ENCODE measurements at regions of chr11 and their contacts with region 1.

Region 1: GRCh38 chr11:46616998-46617675 is at the starts of genes ATG13 and HARBI1:
- DNase-seq: peak; percentile 89 to 95 (median 94)
- ATAC-seq: peak; percentile 96
- H3K4me3 ChIP-seq: peak within 1 kb of the TSS; percentile 99
- H3K4me3 Mint-ChIP-seq: peak within 1 kb of the TSS; percentile 93 to 99 (median 96)
- H3K27ac ChIP-seq: peak within 1 kb of the TSS; percentile 100
- H3K27ac Mint-ChIP-seq: peak within 1 kb of the TSS; percentile 95 to 100 (median 99)
- H3K4me1 ChIP-seq: peaks cover 17 to 27% of the 10 kb centered on the region in 2 donors
- H3K4me1 Mint-ChIP-seq: peaks cover 26 to 53% (median 42%) of the 10 kb centered on the region in 7 donors
- H3K27me3 ChIP-seq: no peaks in the 10 kb centered on the region
- H3K27me3 Mint-ChIP-seq: no peaks in the 10 kb centered on the region
- total RNA-seq, gene ATG13: 70.0 to 114 (median 96.8) TPM
- total RNA-seq, gene HARBI1: 5.8 to 18.1 (median 8.0) TPM

Region 2: GRCh38 chr11:46121724-46122477 is 495.2 kb before region 1 on chr11:
- CTCF ChIA-PET with region 1: no interaction called
- POLR2A ChIA-PET with region 1: interaction called, 3 read pairs
- intact Hi-C with region 1: loop called in 1 of 2 experiments (anchors 2 kb)
- DNase-seq: peak in 7 of 9 donors; percentile 20 to 85 (median 80)
- ATAC-seq: peak; percentile 69
- H3K4me3 ChIP-seq: peak overlapping the region; percentile 53
- H3K4me3 Mint-ChIP-seq: peak overlapping the region; percentile 83 to 95 (median 93)
- H3K27ac ChIP-seq: peak overlapping the region; percentile 80
- H3K27ac Mint-ChIP-seq: peak overlapping the region; percentile 87 to 98 (median 95)
- H3K4me1 ChIP-seq: peaks cover 18 to 22% of the 10 kb centered on the region in 2 donors
- H3K4me1 Mint-ChIP-seq: peaks cover 24 to 39% (median 35%) of the 10 kb centered on the region in 7 donors
- H3K27me3 ChIP-seq: no peaks in the 10 kb centered on the region
- H3K27me3 Mint-ChIP-seq: no peaks in the 10 kb centered on the region

Region 3: DNA sequence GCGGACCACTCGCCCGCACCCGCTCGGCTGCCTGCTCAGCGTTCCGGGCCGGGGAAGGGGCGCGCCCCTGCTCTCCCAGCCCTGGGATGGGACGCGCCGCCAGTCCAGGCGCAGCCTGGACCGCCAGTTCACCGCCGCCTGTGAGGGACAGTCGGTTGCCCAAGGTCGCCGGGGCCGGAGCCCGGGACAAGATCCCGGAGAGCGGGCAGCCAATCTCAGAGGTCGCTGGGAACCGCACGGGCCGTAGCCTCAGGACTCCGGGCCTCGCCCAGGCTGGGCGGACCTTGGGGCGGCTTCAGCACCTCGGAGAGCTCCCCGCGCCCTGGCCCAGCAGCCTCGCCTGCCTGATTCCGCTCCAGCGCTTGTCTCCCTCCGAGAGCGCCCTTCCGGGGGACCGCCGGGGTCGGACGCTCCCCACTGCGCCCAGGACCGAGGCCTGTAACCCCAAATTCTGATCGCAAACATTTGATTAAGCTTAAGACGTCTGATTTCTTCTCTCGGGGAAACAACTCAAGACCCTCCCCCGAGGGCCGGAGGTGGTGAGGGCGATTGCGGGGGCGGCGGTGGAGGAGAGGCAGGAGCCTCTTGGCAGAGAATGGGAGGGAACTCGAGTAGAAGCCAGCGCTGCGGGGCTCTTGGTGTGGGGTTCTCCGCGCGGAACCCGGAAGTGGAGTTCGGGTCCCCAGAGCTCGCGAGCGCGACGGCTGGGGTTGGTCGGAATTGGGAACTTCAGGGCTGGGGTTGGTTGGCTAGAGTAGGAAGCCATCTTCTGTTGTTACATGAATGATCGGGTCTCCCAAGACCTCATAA is 224.5 kb before region 1 on chr11:
- CTCF ChIA-PET with region 1: interaction called, 3 read pairs
- POLR2A ChIA-PET with region 1: no interaction called
- intact Hi-C with region 1: loop called (anchors 2 to 5 kb)
- DNase-seq: peak; percentile 63 to 91 (median 75)
- ATAC-seq: peak; percentile 90
- H3K4me3 ChIP-seq: peak overlapping the region; percentile 35
- H3K4me3 Mint-ChIP-seq: peak overlapping the region; percentile 70 to 84 (median 78)
- H3K27ac ChIP-seq: no peak overlapping the region
- H3K27ac Mint-ChIP-seq: peak overlapping the region in 3 of 9 donors; percentile 54 to 81 (median 73)
- H3K4me1 ChIP-seq: peaks cover 14 to 21% of the 10 kb centered on the region in 2 donors
- H3K4me1 Mint-ChIP-seq: peaks cover 7 to 35% (median 25%) of the 10 kb centered on the region in 7 donors
- H3K27me3 ChIP-seq: peaks cover 0 to 21% of the 10 kb centered on the region in 2 donors
- H3K27me3 Mint-ChIP-seq: peaks cover 26 to 45% (median 36%) of the 10 kb centered on the region in 5 donors

Region 4: GRCh38 chr11:46560300-46560991 is 56.7 kb before region 1 on chr11:
- CTCF ChIA-PET with region 1: no interaction called
- POLR2A ChIA-PET with region 1: interaction called, 8 read pairs
- intact Hi-C with region 1: loop called in 1 of 2 experiments (anchors 1 kb)
- DNase-seq: peak in 7 of 9 donors; percentile 9 to 50 (median 33)
- ATAC-seq: peak; percentile 76
- H3K4me3 ChIP-seq: peak overlapping the region; percentile 57
- H3K4me3 Mint-ChIP-seq: peak overlapping the region; percentile 81 to 92 (median 88)
- H3K27ac ChIP-seq: peak overlapping the region; percentile 73
- H3K27ac Mint-ChIP-seq: peak overlapping the region; percentile 89 to 97 (median 94)
- H3K4me1 ChIP-seq: peaks cover 18 to 23% of the 10 kb centered on the region in 2 donors
- H3K4me1 Mint-ChIP-seq: peaks cover 33 to 80% (median 70%) of the 10 kb centered on the region in 7 donors
- H3K27me3 ChIP-seq: no peaks in the 10 kb centered on the region
- H3K27me3 Mint-ChIP-seq: no peaks in the 10 kb centered on the region

Region 5: DNA sequence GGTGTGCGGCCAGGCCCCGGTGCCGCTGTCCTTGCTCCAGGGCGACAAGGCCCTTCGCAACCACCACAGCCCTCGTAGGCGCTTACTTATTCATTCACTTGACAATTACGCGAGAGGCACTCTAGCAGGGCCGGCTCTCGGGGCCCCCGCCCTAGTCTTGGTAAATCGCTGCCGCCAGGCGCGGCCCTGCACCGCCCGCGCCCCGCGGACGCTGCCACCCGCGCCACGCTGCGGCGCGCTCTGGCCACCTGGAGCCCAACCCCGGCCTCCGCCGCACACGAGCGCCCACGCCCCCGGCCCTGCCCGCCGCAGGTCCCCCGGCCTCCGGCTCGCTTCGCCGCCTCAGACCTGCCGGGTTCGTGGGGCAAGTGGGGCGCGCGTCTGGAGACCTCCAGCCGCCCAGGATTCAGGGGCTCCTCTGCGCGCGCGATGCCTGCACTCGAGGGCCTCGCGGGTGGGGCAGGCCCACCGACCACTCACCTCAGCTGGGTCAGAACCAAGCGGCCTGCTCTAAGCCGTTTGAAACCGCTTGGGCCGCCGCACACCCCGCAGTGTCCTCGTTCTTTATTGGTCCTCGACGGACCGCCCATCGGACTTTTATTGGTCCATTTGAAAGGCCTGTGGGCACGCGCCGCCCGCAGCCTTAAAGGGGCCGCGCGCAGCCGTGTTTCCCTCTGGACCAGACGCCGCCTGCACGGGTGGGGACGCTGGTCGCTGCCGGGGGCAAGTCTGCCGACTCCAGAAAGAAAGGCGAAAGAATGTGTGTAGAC is 228.8 kb after region 1 on chr11 and contains the start of gene CKAP5:
- CTCF ChIA-PET with region 1: no interaction called
- POLR2A ChIA-PET with region 1: no interaction called
- intact Hi-C with region 1: loop called (anchors 1 kb)
- DNase-seq: peak; percentile 63 to 89 (median 80)
- ATAC-seq: peak; percentile 96
- H3K4me3 ChIP-seq: peak within 1 kb of the TSS; percentile 71
- H3K4me3 Mint-ChIP-seq: peak within 1 kb of the TSS; percentile 85 to 99 (median 97)
- H3K27ac ChIP-seq: peak within 1 kb of the TSS; percentile 71
- H3K27ac Mint-ChIP-seq: peak within 1 kb of the TSS; percentile 88 to 97 (median 93)
- H3K4me1 ChIP-seq: peaks cover 0 to 14% of the 10 kb centered on the region in 2 donors
- H3K4me1 Mint-ChIP-seq: peaks cover 33 to 50% (median 43%) of the 10 kb centered on the region in 7 donors
- H3K27me3 ChIP-seq: no peaks in the 10 kb centered on the region
- H3K27me3 Mint-ChIP-seq: no peaks in the 10 kb centered on the region
- total RNA-seq, gene CKAP5: 28.3 to 126 (median 46.0) TPM

Region 6: GRCh38 chr11:47426061-47426956 is 809.2 kb after region 1 on chr11 and contains the start of gene PSMC3:
- CTCF ChIA-PET with region 1: no interaction called
- POLR2A ChIA-PET with region 1: no interaction called
- intact Hi-C with region 1: loop called in 1 of 2 experiments (anchors 1 kb)
- DNase-seq: peak; percentile 92 to 99 (median 95)
- ATAC-seq: peak; percentile 98
- H3K4me3 ChIP-seq: peak within 1 kb of the TSS; percentile 95
- H3K4me3 Mint-ChIP-seq: peak within 1 kb of the TSS; percentile 91 to 99 (median 98)
- H3K27ac ChIP-seq: peak within 1 kb of the TSS; percentile 96
- H3K27ac Mint-ChIP-seq: peak within 1 kb of the TSS; percentile 93 to 99 (median 97)
- H3K4me1 ChIP-seq: peaks cover 9 to 10% of the 10 kb centered on the region in 2 donors
- H3K4me1 Mint-ChIP-seq: peaks cover 16 to 32% (median 27%) of the 10 kb centered on the region in 7 donors
- H3K27me3 ChIP-seq: no peaks in the 10 kb centered on the region
- H3K27me3 Mint-ChIP-seq: no peaks in the 10 kb centered on the region
- total RNA-seq, gene PSMC3: 42.2 to 149 (median 51.3) TPM